Heart left ventricle (tissue), 16 donors: ENCODE measurements at regions of chr5 and their contacts with region 1.

Region 1: GRCh38 chr5:44638589-44638891 is 170.2 kb upstream of the MRPS30 start:
- DNase-seq: no peak
- ATAC-seq: no peak
- H3K4me3 ChIP-seq: no peak overlapping the region
- H3K27ac ChIP-seq: no peak overlapping the region
- H3K4me1 ChIP-seq: no peaks in the 10 kb centered on the region
- H3K27me3 ChIP-seq: no peaks in the 10 kb centered on the region
- CTCF ChIP-seq: no peak
- POLR2A ChIP-seq: no peak

Region 2: DNA sequence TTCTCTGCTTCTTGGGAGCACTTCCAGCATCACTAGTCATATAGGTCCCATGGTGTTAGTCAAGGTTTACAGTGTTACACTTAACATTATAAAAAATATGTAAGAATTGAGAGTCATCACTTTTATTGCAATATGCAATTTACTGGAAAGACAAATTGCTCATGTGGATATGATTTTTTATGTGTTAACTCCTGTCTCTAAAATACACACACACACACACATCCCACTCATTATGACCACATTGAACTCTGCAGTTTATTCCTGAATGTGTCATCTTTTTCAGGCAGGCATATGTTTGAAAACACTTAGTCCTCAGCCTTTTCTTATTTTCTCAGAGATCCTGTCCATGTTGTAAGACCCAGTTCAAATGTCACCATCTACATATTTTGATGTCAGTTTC is 21.7 kb after region 1 on chr5:
- intact Hi-C with region 1: loop called in 1 of 10 experiments (anchors 1 kb)
- DNase-seq: no peak
- ATAC-seq: no peak
- H3K4me3 ChIP-seq: no peak overlapping the region
- H3K27ac ChIP-seq: no peak overlapping the region
- H3K4me1 ChIP-seq: no peaks in the 10 kb centered on the region
- H3K27me3 ChIP-seq: no peaks in the 10 kb centered on the region
- CTCF ChIP-seq: no peak
- POLR2A ChIP-seq: no peak

Region 3: GRCh38 chr5:44675296-44675695 is 36.8 kb after region 1 on chr5:
- intact Hi-C with region 1: no loop called
- DNase-seq: no peak
- ATAC-seq: no peak
- H3K4me3 ChIP-seq: no peak overlapping the region
- H3K27ac ChIP-seq: no peak overlapping the region
- H3K4me1 ChIP-seq: no peaks in the 10 kb centered on the region
- H3K27me3 ChIP-seq: no peaks in the 10 kb centered on the region
- CTCF ChIP-seq: no peak
- POLR2A ChIP-seq: no peak